Right ventricle myocardium inferior (tissue), 1 donor: ENCODE measurements at regions of chr14 and their contacts with region 1.

Region 1: DNA sequence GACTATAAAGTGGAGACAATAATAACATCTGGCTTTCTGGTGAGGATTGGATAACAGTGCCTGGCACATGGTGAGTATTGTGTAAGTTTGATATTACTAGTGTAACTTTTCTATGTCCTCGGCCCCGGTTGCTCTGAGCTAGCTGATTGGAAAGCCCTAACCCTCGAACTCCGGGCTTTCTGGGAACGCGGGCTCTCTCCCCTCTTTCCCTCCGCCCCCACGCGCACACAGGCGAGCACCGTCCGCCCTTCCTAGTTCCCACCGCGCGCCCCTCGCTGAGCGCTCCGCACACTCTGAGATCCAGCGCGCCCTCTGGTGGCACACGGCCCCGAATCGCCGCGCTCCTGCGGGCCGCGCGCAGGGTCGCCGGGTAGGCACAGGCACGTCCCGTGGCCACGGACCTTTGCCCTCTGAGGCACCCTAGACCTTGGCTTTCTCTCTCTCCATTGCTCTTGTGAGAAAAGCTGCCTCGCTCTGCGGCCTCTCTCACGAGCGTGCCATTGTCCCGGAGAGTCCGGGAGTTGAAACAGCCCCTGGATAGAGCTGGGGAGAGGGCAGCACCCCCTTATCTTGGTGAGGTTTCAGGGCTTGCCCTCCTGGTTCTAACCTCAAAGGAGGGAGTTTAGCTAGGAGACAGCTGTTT is 23.2 kb upstream of the ESRRB start:
- DNase-seq: peak; percentile 81
- ATAC-seq: peak; percentile 73

Region 2: GRCh38 chr14:76050797-76051392 is 301.9 kb before region 1 on chr14:
- intact Hi-C with region 1: loop called (anchors 2 kb)
- DNase-seq: no peak
- ATAC-seq: peak; percentile 65

Region 3: GRCh38 chr14:76203086-76204001 is 149.4 kb before region 1 on chr14:
- intact Hi-C with region 1: loop called (anchors 10 kb)
- DNase-seq: peak; percentile 41
- ATAC-seq: no peak

Region 4: DNA sequence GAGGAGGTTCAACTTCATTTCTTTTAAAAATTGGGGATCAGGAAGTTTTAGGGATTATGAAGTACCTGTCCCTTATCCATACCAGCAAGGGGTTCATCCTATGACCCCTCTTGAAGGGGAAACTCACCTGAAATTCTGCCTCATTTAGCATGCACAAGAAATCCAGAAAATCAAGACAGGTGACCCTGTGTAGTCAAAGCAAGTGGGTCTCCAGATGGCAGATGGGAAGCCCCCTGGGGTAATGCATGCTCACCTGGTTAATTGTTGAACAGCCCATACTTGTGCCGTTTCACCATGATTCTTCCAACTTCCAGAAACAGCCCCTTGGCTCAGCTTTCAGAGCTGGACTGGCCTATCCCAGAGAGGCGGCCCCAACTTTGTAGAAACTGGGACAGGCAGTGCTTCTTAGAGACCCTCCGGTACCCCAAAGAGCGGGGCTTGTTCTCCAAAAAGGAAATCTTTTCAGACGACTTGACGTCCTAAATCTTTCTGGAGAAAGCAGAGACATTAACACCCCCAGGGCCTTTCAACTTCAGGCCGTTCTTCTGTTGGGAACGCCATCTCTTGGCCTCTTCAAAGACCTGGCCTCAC is 43.1 kb before region 1 on chr14:
- intact Hi-C with region 1: loop called (anchors 1 kb)
- DNase-seq: no peak
- ATAC-seq: no peak